ENCODE measurements at regions of chr7 and their contacts with region 1.

Region 1: DNA sequence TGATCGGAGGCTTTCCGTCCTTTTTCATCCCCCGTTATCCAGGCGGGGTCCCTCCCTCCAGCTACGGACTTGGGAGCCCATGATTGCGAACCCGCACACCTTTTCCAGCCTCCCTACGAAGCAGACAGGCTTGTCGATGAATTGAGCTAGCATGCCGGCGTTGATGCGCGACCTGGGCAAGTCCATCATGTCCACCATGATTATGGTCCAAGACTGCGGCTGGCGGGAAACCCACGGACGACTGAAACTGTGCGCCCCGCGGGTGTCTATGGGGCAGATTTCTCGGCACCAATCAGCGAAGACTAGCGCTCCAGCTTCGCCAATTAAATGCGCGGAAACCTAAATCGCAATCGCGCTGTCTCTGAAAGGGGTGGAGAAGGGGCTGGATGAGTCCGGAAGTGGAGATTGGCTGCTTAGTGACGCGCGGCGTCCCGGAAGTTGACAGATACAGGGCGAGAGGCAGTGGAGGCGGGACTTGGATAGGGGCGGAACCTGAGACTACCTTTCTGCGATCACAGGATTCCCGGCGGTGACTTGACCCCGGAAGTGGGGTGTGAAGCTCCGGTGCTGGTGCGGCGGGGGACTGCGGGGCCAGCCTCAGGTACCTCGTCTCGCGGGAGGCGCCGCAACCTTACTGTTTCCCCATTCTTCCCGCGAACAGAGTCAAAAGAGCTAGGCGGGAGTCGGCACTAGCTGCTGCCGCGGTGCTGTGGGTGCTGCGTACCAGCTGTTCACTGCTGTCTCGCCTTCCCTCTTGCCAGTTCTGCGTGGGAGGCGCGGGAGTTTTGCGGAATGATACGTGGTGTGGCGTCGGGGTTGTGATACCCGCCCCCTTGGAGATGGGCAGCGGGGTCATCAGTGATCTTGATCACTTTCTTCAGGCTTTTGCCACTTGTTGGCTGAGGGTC is at the start of gene UMAD1:
- DNase-seq: peak; percentile 99
- H3K4me3 Mint-ChIP-seq: peak within 1 kb of the TSS; percentile 97
- H3K27ac Mint-ChIP-seq: peak within 1 kb of the TSS; percentile 100
- H3K4me1 Mint-ChIP-seq: peaks cover 45% of the 10 kb centered on the region
- H3K27me3 Mint-ChIP-seq: peaks cover 1% of the 10 kb centered on the region
- total RNA-seq, gene UMAD1: 15.0 to 17.6 TPM

Region 2: DNA sequence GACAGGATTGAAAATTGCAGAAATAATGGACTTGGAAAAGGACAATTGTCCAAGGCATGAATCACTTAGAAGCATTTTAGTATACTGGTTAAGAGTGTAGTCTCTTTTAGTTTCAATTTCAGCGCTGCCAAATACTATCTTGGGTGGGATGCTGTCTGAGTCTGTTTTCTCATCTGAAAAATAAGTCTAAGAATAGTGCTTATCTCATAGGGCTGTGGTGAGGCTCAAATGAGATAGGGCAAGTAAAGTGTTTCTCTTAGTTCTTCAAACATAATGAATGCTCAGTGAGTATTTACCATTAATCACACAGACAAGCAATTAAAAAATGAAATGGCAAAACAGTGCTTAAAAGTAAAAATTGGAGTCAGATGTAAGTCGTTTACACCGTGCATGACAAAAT is 504.1 kb before region 1 on chr7:
- CTCF ChIA-PET with region 1: no interaction called
- POLR2A ChIA-PET with region 1: no interaction called
- intact Hi-C with region 1: no loop called
- DNase-seq: no peak
- H3K4me3 Mint-ChIP-seq: no peak overlapping the region
- H3K27ac Mint-ChIP-seq: no peak overlapping the region
- H3K4me1 Mint-ChIP-seq: peaks cover 12% of the 10 kb centered on the region
- H3K27me3 Mint-ChIP-seq: no peaks in the 10 kb centered on the region

Region 3: DNA sequence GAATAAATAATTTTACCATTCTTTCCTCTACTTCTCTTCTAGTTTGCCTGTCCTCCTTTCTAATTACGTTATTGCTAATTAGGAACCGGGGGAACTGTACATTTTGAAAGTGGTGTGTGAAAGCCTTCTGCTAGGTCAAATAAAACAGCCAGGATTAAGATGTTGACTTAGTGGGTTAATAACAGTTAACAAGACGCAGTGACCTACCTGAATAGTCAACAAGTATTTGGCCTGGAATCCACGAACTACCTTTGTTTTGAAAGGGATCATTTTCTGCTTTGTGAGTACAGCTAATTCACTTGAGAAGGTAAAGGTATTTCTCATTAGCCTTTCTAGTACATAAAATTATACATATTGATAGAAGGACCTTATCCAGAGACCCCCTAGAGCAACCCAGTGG is 244.7 kb before region 1 on chr7:
- CTCF ChIA-PET with region 1: no interaction called
- POLR2A ChIA-PET with region 1: no interaction called
- intact Hi-C with region 1: no loop called
- DNase-seq: no peak
- H3K4me3 Mint-ChIP-seq: no peak overlapping the region
- H3K27ac Mint-ChIP-seq: no peak overlapping the region
- H3K4me1 Mint-ChIP-seq: no peaks in the 10 kb centered on the region
- H3K27me3 Mint-ChIP-seq: peaks cover 2% of the 10 kb centered on the region

Region 4: DNA sequence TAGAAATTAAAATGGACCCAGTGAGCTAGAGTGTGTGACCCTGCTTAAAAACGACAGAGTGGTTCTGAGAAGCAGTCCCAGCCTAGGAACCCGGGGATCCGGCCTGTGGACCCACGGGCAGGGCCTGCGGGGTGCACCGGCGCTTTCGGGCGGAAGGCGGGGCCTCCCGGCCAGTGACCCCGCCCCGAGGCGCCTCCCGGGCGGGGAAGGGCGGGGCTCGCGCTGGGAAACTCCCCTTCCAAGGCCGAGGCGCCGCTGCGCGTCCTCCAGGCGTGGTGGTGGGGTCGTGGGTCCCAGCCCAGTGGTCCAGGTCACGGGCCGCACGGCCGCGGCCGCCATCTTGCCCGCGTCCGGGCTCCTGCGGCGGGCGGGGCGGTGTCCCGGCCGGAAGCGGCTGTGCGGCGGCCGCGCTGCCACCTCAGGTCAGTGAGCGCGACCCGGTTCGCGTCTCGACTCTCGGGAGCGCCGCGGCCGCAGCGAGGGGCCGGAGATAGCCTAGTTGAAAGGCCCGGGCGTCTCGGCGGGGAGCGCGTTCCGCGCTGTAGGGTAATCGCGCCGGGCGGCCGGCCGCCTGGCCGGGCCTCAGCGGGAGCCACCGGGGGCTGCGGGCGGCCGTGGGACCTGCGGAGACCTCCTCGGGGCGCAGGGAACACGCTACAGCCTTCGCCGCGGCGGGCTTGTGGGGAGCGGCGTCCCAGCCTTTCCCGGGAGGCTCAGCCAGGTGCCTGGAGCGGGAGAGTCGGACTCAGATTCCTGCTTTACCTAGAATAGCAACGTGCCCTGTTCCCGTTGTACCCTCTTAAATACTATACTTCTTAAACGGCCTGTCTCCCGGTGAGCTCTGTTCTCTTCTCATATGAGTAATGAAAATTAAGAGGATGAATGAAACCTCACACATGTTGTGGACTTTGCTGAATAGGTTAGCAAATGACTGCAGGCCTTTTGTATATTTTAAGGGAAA is 73.5 kb before region 1 on chr7 and contains the start of gene MIOS:
- CTCF ChIA-PET with region 1: no interaction called
- POLR2A ChIA-PET with region 1: interaction called, 6 read pairs
- intact Hi-C with region 1: loop called (anchors 1 kb)
- DNase-seq: peak; percentile 85
- H3K4me3 Mint-ChIP-seq: peak within 1 kb of the TSS; percentile 81
- H3K27ac Mint-ChIP-seq: peak within 1 kb of the TSS; percentile 75
- H3K4me1 Mint-ChIP-seq: peaks cover 29% of the 10 kb centered on the region
- H3K27me3 Mint-ChIP-seq: no peaks in the 10 kb centered on the region
- total RNA-seq, gene MIOS: 37.2 to 37.7 TPM

Region 5: DNA sequence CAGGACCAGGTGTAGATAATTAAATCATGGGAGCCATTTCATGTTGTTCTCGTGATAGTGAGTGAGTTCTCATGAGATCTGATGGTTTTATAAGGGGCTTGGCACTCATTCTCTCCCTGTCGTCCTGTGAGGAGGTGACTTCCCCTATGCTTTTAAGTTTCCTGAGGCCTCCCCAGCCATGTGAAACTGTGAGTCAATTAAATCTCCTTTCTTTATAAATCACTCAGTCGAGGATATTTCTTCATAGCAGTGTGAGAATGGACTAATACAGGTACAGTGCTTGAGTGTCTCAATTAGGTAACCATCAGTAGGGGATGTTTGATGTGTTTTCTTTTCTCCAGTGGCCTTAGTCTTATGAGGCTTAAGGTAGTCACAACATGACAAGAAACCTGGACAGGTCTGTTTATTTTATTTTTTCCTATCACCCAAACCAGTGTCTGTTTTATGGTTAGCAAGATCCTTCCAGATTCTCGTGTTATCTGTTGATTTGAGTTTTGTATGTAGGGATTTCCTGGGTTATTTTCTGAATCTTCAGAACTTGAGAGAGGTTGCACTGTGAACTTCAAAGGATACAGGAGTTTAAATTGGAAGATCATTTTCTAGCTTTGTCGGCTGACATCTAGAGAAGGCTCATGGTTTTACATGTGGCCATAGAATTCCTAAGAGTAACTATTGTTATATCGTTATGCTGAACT is 32.2 kb after region 1 on chr7:
- CTCF ChIA-PET with region 1: interaction called, 3 read pairs
- POLR2A ChIA-PET with region 1: interaction called, 11 read pairs
- intact Hi-C with region 1: loop called (anchors 1 kb)
- DNase-seq: peak; percentile 49
- H3K4me3 Mint-ChIP-seq: peak overlapping the region; percentile 11
- H3K27ac Mint-ChIP-seq: peak overlapping the region; percentile 67
- H3K4me1 Mint-ChIP-seq: peaks cover 39% of the 10 kb centered on the region
- H3K27me3 Mint-ChIP-seq: no peaks in the 10 kb centered on the region

Region 6: DNA sequence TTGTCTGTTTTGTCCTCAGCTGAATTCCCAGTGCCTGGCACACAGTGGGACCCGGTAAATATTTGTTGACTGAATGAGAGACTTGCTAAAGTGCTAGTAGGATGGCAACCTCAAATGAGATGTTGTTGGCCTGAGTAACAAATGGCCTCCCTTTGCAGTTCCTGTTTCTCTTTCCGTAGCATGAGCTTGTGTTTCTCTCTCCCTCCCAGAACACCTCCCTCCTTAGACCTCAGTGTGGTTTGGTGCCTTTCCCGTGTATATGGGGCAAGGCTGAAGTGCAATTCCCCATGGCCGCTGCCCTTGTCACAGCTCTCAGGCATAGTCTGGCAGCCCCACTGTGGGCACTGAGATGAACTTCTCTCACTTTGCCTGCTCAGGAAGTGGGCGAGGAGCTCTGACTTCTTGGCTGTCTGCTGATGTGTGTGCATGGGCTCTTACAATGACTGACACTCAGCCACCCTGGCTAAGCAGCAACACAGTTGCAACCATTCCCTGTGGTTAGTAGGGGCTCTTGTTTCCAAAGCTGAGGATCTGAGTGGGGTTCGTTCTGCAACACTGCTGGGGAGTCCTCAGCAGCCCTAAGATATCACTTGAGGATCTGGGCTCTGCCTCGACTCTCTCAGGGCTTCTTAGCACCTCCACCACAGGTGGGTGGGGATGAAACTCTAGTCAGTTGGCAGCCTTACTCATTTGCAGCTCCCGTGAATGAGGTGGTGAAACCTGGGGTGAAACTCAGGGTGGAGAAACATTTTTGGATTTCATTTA is 485.4 kb after region 1 on chr7:
- CTCF ChIA-PET with region 1: no interaction called
- POLR2A ChIA-PET with region 1: interaction called, 11 read pairs
- intact Hi-C with region 1: loop called (anchors 2 kb)
- DNase-seq: peak; percentile 89
- H3K4me3 Mint-ChIP-seq: peak overlapping the region; percentile 66
- H3K27ac Mint-ChIP-seq: peak overlapping the region; percentile 92
- H3K4me1 Mint-ChIP-seq: peaks cover 78% of the 10 kb centered on the region
- H3K27me3 Mint-ChIP-seq: no peaks in the 10 kb centered on the region

Region 7: DNA sequence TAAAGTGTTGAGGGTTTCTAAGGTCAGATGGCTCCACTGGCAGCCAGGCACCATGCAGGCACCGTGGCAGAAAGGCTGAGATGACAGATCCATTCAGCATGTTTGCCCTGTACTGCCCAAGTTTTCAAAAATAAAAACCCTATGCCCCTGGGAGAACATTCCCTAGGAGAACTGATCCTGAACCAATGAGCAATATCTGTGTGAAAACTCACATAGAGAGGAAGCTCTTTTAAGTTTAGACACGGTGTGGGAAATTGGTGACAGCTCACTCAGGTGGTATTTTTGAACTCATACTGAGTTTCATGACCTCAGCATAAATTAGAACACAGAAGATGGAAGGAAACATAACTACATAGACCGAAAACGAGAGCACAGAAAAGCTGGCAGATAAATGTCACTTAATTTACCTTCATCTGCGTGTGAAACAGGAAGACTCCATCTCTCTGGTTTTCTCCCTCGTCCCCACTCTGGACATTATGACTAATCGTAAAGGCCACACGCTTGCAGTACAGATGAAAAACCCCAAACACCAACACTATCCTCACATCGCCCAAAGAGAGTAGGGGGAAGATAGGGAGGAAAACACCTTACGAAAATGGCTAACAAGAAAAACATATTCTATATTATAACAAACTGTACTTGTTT is 493.7 kb after region 1 on chr7:
- CTCF ChIA-PET with region 1: no interaction called
- POLR2A ChIA-PET with region 1: no interaction called
- intact Hi-C with region 1: loop called (anchors 2 kb)
- DNase-seq: peak; percentile 66
- H3K4me3 Mint-ChIP-seq: peak overlapping the region; percentile 35
- H3K27ac Mint-ChIP-seq: peak overlapping the region; percentile 71
- H3K4me1 Mint-ChIP-seq: peaks cover 60% of the 10 kb centered on the region
- H3K27me3 Mint-ChIP-seq: no peaks in the 10 kb centered on the region

Measured in activated CD4-positive, alpha-beta memory T cell treated with anti-CD3 and anti-CD28 coated beads for 36 hours (primary cell).